ENCODE measurements at regions of chr2 and their contacts with region 1.

Region 1: DNA sequence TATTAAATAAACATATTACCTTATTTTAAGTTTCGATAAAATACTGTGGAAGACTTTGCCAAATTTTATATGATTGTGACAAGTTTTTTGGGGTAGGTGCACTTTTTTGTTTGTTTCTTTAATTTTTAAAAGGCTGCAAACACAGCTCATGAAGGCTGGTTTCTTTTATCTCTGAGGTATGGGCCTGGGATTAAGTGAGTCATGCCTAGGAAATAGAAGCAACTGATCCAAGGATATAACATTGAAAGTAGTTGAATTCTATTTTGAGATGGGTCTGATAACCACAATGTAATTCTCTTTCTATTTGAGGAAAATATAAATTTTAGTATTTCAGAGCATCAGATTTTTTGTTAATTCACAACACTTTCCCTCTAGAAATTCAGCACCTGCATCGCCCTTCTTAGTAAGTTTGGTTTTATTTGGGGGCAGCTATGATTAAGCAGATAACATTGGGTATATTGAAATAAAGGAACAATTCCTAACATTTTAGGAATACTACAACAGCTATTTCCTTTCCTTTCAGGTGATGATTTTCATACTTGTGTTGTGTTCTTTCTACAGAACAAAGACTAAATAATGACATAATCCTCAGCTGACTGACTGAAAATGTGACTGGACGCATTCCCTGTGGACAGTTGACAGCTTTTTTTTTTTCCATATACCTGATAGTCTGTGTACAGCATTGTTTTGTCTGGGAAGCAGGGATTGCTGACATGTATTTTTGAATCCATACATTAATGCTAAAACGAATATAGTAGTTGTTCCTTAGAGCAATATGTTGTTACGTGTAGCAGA is 16.8 kb downstream of the RBM45 start:
- DNase-seq: no peak
- H3K4me3 ChIP-seq: no peak overlapping the region
- H3K27ac ChIP-seq: no peak overlapping the region
- H3K4me1 ChIP-seq: peaks cover 1% of the 10 kb centered on the region
- H3K27me3 ChIP-seq: no peaks in the 10 kb centered on the region
- CTCF ChIP-seq: no peak
- EP300 ChIP-seq: no peak
- POLR2A ChIP-seq: no peak

Region 2: GRCh38 chr2:177263451-177264208 is 865.4 kb before region 1 on chr2:
- intact Hi-C with region 1: no loop called
- DNase-seq: peak; percentile 99 to 100 (median 99)
- H3K4me3 ChIP-seq: peak overlapping the region; percentile 100
- H3K27ac ChIP-seq: peak overlapping the region; percentile 100
- H3K4me1 ChIP-seq: peaks cover 10% of the 10 kb centered on the region
- H3K27me3 ChIP-seq: no peaks in the 10 kb centered on the region
- CTCF ChIP-seq: peak; percentile 90 to 97 (median 97)
- EP300 ChIP-seq: peak; percentile 79
- POLR2A ChIP-seq: peak; percentile 79

Region 3: GRCh38 chr2:178219247-178219646 is 90.2 kb after region 1 on chr2:
- intact Hi-C with region 1: loop called in 1 of 4 experiments (anchors 5 kb)
- DNase-seq: no peak
- H3K4me3 ChIP-seq: no peak overlapping the region
- H3K27ac ChIP-seq: no peak overlapping the region
- H3K4me1 ChIP-seq: no peaks in the 10 kb centered on the region
- H3K27me3 ChIP-seq: no peaks in the 10 kb centered on the region
- CTCF ChIP-seq: no peak
- EP300 ChIP-seq: no peak
- POLR2A ChIP-seq: no peak

Measured in ovary (tissue), 10 donors.